Naive thymus-derived CD4-positive, alpha-beta T cell (primary cell): ENCODE measurements at regions of chr5 and their contacts with region 1.

Region 1: GRCh38 chr5:159106569-159107282 is 7.0 kb upstream of the EBF1 start:
- DNase-seq: peak; percentile 40 to 73 (median 60)
- ATAC-seq: peak; percentile 80
- H3K4me3 ChIP-seq: peak overlapping the region; percentile 56
- H3K4me3 Mint-ChIP-seq: peak overlapping the region; percentile 76 to 95 (median 88)
- H3K27ac ChIP-seq: no peak overlapping the region
- H3K27ac Mint-ChIP-seq: peak overlapping the region in 2 of 9 donors; percentile 36 to 61
- H3K4me1 ChIP-seq: peaks cover 0 to 16% of the 10 kb centered on the region in 2 donors
- H3K4me1 Mint-ChIP-seq: peaks cover 8 to 28% (median 24%) of the 10 kb centered on the region in 7 donors
- H3K27me3 ChIP-seq: peaks cover 6 to 26% of the 10 kb centered on the region in 2 donors
- H3K27me3 Mint-ChIP-seq: peaks cover 48 to 80% (median 60%) of the 10 kb centered on the region in 5 donors

Region 2: GRCh38 chr5:157743163-157744050 is 1363.3 kb before region 1 on chr5 and contains the start of gene LSM11:
- CTCF ChIA-PET with region 1: no interaction called
- POLR2A ChIA-PET with region 1: no interaction called
- intact Hi-C with region 1: loop called in 1 of 2 experiments (anchors 5 kb)
- DNase-seq: peak; percentile 81 to 97 (median 89)
- ATAC-seq: peak; percentile 100
- H3K4me3 ChIP-seq: peak within 1 kb of the TSS; percentile 66
- H3K4me3 Mint-ChIP-seq: peak within 1 kb of the TSS; percentile 85 to 97 (median 93)
- H3K27ac ChIP-seq: peak within 1 kb of the TSS; percentile 74
- H3K27ac Mint-ChIP-seq: peak within 1 kb of the TSS; percentile 65 to 91 (median 82)
- H3K4me1 ChIP-seq: peaks cover 13% of the 10 kb centered on the region in 2 donors
- H3K4me1 Mint-ChIP-seq: peaks cover 7 to 42% (median 23%) of the 10 kb centered on the region in 7 donors
- H3K27me3 ChIP-seq: no peaks in the 10 kb centered on the region
- H3K27me3 Mint-ChIP-seq: no peaks in the 10 kb centered on the region
- total RNA-seq, gene LSM11: 1.6 to 5.0 (median 4.0) TPM

Region 3: GRCh38 chr5:157858527-157859226 is 1248.0 kb before region 1 on chr5 and contains the start of gene CLINT1:
- CTCF ChIA-PET with region 1: no interaction called
- POLR2A ChIA-PET with region 1: no interaction called
- intact Hi-C with region 1: loop called (anchors 5 to 10 kb)
- DNase-seq: peak; percentile 78 to 86 (median 84)
- ATAC-seq: peak; percentile 96
- H3K4me3 ChIP-seq: peak within 1 kb of the TSS; percentile 96
- H3K4me3 Mint-ChIP-seq: peak within 1 kb of the TSS; percentile 88 to 99 (median 96)
- H3K27ac ChIP-seq: peak within 1 kb of the TSS; percentile 85
- H3K27ac Mint-ChIP-seq: peak within 1 kb of the TSS; percentile 94 to 99 (median 96)
- H3K4me1 ChIP-seq: peaks cover 7 to 13% of the 10 kb centered on the region in 2 donors
- H3K4me1 Mint-ChIP-seq: peaks cover 51 to 83% (median 78%) of the 10 kb centered on the region in 7 donors
- H3K27me3 ChIP-seq: no peaks in the 10 kb centered on the region
- H3K27me3 Mint-ChIP-seq: no peaks in the 10 kb centered on the region
- total RNA-seq, gene CLINT1: 58.8 to 94.2 (median 74.0) TPM

Region 4: DNA sequence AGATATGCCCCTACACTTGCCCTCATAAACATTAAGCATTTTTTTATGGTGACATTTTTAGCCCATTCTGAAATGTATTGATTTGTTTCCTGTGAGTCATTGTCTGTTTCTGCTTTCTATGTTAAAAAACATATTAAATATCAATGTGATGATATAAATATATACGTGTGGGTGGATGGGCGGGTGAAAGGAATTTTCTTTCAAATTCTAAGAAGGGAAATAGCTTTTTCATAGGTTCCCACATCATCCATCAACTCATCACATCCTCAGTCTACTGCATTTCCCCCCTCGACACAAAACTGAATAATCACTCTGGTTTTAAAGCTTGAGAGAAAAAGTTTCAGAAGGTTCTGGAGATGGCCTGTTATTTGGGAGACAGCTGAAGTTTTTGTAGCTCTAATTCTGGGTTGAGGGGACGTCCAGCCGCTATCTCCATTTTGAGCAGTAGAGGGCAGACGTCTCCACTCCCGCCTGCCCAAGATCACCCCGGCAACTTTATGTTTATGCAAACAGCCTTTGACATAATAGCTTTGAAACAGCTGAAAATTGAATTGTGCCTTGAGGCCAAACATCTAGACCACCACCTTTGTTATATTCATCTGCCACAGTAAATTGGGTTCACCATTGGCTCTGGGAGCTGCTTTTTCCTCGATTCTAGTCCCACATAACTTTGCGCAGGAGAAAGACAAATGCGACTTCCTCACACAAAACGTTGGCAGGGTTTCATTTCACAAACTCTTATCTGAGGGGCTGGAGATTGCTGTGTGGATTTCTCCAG is 1031.5 kb before region 1 on chr5:
- CTCF ChIA-PET with region 1: interaction called, 18 read pairs
- POLR2A ChIA-PET with region 1: no interaction called
- intact Hi-C with region 1: loop called (anchors 1 kb)
- DNase-seq: peak; percentile 7 to 63 (median 42)
- ATAC-seq: peak; percentile 83
- H3K4me3 ChIP-seq: no peak overlapping the region
- H3K4me3 Mint-ChIP-seq: peak overlapping the region in 3 of 10 donors; percentile 9 to 38 (median 37)
- H3K27ac ChIP-seq: no peak overlapping the region
- H3K27ac Mint-ChIP-seq: peak overlapping the region in 4 of 9 donors; percentile 39 to 61 (median 42)
- H3K4me1 ChIP-seq: no peaks in the 10 kb centered on the region
- H3K4me1 Mint-ChIP-seq: peaks cover 0 to 5% (median 4%) of the 10 kb centered on the region in 7 donors
- H3K27me3 ChIP-seq: no peaks in the 10 kb centered on the region
- H3K27me3 Mint-ChIP-seq: peaks cover 0 to 27% (median 10%) of the 10 kb centered on the region in 5 donors

Region 5: GRCh38 chr5:158435161-158435616 is 671.5 kb before region 1 on chr5:
- CTCF ChIA-PET with region 1: no interaction called
- POLR2A ChIA-PET with region 1: no interaction called
- intact Hi-C with region 1: loop called (anchors 5 to 10 kb)
- DNase-seq: peak in 8 of 9 donors; percentile 19 to 70 (median 56)
- ATAC-seq: peak; percentile 88
- H3K4me3 ChIP-seq: peak overlapping the region; percentile 2
- H3K4me3 Mint-ChIP-seq: peak overlapping the region; percentile 61 to 85 (median 80)
- H3K27ac ChIP-seq: peak overlapping the region; percentile 28
- H3K27ac Mint-ChIP-seq: peak overlapping the region; percentile 49 to 89 (median 74)
- H3K4me1 ChIP-seq: peaks cover 9 to 51% of the 10 kb centered on the region in 2 donors
- H3K4me1 Mint-ChIP-seq: peaks cover 21 to 73% (median 64%) of the 10 kb centered on the region in 7 donors
- H3K27me3 ChIP-seq: no peaks in the 10 kb centered on the region
- H3K27me3 Mint-ChIP-seq: no peaks in the 10 kb centered on the region

Region 6: GRCh38 chr5:158701406-158702177 is 405.1 kb before region 1 on chr5:
- CTCF ChIA-PET with region 1: interaction called, 246 read pairs
- POLR2A ChIA-PET with region 1: interaction called, 23 read pairs
- intact Hi-C with region 1: no loop called
- DNase-seq: no peak
- ATAC-seq: no peak
- H3K4me3 ChIP-seq: no peak overlapping the region
- H3K4me3 Mint-ChIP-seq: no peak overlapping the region
- H3K27ac ChIP-seq: no peak overlapping the region
- H3K27ac Mint-ChIP-seq: no peak overlapping the region
- H3K4me1 ChIP-seq: no peaks in the 10 kb centered on the region
- H3K4me1 Mint-ChIP-seq: no peaks in the 10 kb centered on the region
- H3K27me3 ChIP-seq: peaks cover 0 to 2% of the 10 kb centered on the region in 2 donors
- H3K27me3 Mint-ChIP-seq: peaks cover 0 to 10% (median 0%) of the 10 kb centered on the region in 5 donors

Region 7: DNA sequence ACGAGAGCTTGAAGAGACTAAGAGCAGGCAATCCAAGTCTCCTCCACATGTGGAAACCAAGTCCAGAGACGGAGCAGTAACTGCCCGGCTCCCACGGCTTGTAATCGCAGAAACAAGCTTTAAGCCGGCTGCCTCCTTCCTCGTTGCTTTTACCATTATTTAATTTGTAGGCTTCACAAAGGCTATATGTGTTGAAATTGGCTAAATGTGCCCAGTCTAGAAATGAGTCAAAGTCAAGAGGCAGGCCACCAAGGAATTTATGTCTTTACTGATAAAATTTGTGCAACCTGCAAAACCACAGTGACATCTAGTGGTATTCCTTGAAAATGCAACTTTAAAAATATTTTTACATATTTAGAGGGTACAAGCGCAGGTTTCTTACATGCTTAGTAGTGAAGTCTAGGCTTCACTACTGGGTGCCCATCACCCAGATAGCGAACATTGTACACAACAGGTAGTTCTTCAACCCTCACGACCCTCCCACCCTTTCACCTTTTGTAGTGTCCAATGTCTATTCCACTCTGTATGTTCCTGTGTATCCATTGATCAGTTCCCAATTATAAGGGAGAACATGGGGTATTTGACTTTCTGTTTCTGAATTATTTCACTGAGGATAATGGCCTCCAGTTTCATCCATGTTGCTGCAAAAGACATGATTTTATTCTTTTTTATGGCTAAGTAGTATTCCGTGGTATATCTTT is 26.5 kb after region 1 on chr5:
- CTCF ChIA-PET with region 1: interaction called, 26 read pairs
- POLR2A ChIA-PET with region 1: no interaction called
- intact Hi-C with region 1: loop called (anchors 1 to 2 kb)
- DNase-seq: peak in 6 of 9 donors; percentile 8 to 59 (median 54)
- ATAC-seq: peak; percentile 52
- H3K4me3 ChIP-seq: no peak overlapping the region
- H3K4me3 Mint-ChIP-seq: no peak overlapping the region
- H3K27ac ChIP-seq: no peak overlapping the region
- H3K27ac Mint-ChIP-seq: no peak overlapping the region
- H3K4me1 ChIP-seq: no peaks in the 10 kb centered on the region
- H3K4me1 Mint-ChIP-seq: no peaks in the 10 kb centered on the region
- H3K27me3 ChIP-seq: no peaks in the 10 kb centered on the region
- H3K27me3 Mint-ChIP-seq: peaks cover 0 to 29% (median 7%) of the 10 kb centered on the region in 5 donors

Region 8: GRCh38 chr5:159149085-159149484 is 42.4 kb after region 1 on chr5:
- CTCF ChIA-PET with region 1: no interaction called
- POLR2A ChIA-PET with region 1: no interaction called
- intact Hi-C with region 1: no loop called
- DNase-seq: no peak
- ATAC-seq: no peak
- H3K4me3 ChIP-seq: no peak overlapping the region
- H3K4me3 Mint-ChIP-seq: no peak overlapping the region
- H3K27ac ChIP-seq: no peak overlapping the region
- H3K27ac Mint-ChIP-seq: no peak overlapping the region
- H3K4me1 ChIP-seq: no peaks in the 10 kb centered on the region
- H3K4me1 Mint-ChIP-seq: peaks cover 0 to 2% (median 0%) of the 10 kb centered on the region in 7 donors
- H3K27me3 ChIP-seq: no peaks in the 10 kb centered on the region
- H3K27me3 Mint-ChIP-seq: peaks cover 0 to 22% (median 3%) of the 10 kb centered on the region in 5 donors